Dorsolateral prefrontal cortex (tissue), 120 donors: ENCODE measurements at regions of chr12 and their contacts with region 1.

Region 1: DNA sequence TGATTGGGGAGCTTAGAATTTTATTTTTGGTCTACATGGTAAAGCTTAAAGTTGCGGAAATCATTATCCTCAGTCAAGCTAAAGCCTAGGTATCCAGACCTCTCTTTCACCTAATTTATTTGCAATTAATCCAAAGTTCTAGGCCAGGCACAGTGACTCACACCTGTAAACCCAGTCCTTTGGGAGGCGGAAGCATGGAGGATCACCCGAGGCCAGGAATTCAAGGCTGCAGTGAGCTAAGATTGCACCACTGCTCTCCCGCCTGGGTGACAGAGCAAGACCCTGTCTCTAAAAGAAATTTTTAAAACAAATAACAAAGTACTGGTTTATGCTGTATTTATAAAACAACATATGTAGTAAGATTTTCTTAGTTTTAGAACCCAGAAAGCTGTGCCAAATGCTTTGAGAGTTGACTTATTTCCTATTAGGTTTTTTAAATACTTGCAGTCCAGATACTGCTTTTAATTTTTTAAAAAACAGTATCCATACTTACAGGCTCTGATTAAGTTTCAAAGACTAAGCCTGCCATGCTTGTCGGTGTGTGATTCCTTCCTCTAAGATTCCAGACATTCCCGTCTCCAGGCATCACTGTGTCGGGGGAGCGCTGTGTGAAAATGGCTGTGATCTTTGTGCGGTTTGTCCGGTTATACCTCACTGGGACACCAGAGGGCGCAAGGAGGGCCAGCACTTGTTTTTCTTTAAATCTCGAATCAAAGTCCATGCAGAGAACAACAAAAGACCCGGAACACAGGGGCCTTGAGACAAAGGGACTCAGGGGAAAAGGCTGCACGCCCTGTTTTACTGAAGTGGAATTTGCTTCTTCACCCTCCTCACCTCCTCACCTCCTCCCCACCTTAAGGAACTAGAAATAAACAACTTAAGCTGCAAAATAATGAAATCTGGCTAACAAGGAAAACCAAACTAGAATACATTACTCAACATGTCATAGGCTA is 24.6 kb upstream of the TMPO start:
- DNase-seq: peak; percentile 76 to 92 (median 86)
- H3K4me3 ChIP-seq: peak overlapping the region in 51 of 59 donors; percentile 1 to 59 (median 35)
- H3K27ac ChIP-seq: peak overlapping the region in 58 of 59 donors; percentile 54 to 96 (median 86)
- H3K27me3 ChIP-seq: no peaks in the 10 kb centered on the region
- CTCF ChIP-seq: peak; percentile 76 to 97 (median 89)

Region 2: DNA sequence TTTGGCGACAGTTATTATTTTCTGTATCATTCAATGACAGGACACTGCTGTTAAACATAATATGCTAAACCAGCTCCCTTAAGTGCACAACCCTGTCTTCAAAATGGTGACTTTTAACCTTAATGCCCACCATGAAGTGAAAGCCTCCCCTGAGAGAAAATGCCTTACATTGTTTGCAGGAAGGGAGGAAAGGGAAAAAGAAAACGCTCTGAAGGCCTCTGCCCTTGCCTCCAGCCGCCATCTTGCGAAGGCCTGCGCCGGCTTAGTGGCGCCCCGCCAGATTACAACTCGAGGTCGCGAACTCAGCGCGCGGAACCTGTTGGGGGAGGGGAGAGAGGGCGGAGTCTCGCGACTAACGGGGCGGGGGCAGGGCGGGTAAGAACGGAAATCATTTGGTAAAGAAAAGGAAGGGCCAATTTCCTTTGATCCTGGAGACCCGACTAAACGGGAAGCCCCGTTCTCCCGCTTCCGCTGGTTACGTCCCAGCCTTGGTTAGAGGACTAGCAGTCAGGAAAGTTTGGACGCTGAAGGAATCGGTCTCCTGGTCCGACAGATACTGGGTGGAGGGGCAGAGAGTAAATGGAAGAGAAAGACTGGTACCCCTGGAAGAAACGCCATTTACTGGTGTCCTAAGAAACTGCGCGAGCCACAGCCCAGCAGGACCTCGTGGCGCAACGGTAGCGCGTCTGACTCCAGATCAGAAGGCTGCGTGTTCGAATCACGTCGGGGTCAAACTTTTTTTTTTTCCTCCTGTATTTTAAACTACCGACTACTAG is 13.0 kb after region 1 on chr12:
- intact Hi-C with region 1: loop called in 1 of 2 experiments (anchors 1 kb)
- DNase-seq: peak; percentile 77 to 93 (median 88)
- H3K4me3 ChIP-seq: peak overlapping the region; percentile 48 to 93 (median 80)
- H3K27ac ChIP-seq: peak overlapping the region; percentile 94 to 100 (median 99)
- H3K27me3 ChIP-seq: no peaks in the 10 kb centered on the region
- CTCF ChIP-seq: peak in 15 of 56 donors; percentile 1 to 48 (median 13)

Region 3: GRCh38 chr12:98516184-98516873 is 25.6 kb after region 1 on chr12:
- intact Hi-C with region 1: loop called (anchors 1 to 2 kb)
- DNase-seq: peak; percentile 38 to 74 (median 66)
- H3K4me3 ChIP-seq: peak overlapping the region; percentile 71 to 98 (median 91)
- H3K27ac ChIP-seq: peak overlapping the region; percentile 69 to 99 (median 96)
- H3K27me3 ChIP-seq: no peaks in the 10 kb centered on the region
- CTCF ChIP-seq: peak; percentile 55 to 87 (median 77)

Region 4: GRCh38 chr12:98653866-98654493 is 163.2 kb after region 1 on chr12:
- intact Hi-C with region 1: loop called in 1 of 2 experiments (anchors 2 kb)
- DNase-seq: no peak
- H3K4me3 ChIP-seq: no peak overlapping the region
- H3K27ac ChIP-seq: no peak overlapping the region
- H3K27me3 ChIP-seq: no peaks in the 10 kb centered on the region
- CTCF ChIP-seq: peak in 55 of 56 donors; percentile 29 to 83 (median 64)

Region 5: DNA sequence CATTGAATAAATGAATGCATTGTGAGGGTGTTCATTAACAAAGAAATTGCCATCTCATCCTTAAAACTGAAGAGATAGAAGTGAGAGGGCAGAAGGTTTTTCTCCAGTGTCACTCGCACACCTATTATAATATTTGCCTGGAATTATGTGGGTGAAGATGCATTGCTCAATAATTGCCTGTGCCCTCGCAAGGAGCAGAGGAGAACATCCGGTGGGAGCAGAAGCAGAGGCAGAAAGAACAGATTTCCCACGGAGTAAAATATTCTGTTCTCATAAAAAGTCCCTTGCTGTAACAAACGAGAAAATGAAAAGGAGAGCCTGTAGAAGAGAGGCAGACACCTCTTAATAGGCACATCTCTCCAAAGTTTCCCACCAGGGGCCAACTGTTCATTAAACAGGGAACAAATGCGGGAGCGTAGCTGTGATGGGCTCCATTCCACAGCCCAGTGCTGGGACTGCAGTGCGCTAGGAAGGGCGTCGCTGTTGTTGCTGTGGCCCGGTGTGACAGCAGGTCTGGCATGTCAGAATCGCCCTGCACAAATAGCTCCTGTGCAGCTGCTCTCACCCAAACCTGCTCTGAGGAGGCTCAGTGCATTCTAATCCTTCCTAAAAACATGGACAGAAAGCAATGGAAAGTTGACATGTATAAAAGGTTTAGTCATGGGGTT is 514.2 kb after region 1 on chr12:
- intact Hi-C with region 1: loop called in 1 of 2 experiments (anchors 5 kb)
- DNase-seq: peak in 2 of 10 donors; percentile 38 to 54
- H3K4me3 ChIP-seq: peak overlapping the region in 6 of 59 donors; percentile 6 to 20 (median 18)
- H3K27ac ChIP-seq: peak overlapping the region in 58 of 59 donors; percentile 3 to 87 (median 72)
- H3K27me3 ChIP-seq: no peaks in the 10 kb centered on the region
- CTCF ChIP-seq: no peak